ENCODE measurements at regions of chr20 and their contacts with region 1.

Region 1: GRCh38 chr20:37527638-37528441 is at the start of gene BLCAP:
- DNase-seq: peak; percentile 92 to 97 (median 95)
- ATAC-seq: peak; percentile 93
- H3K4me3 ChIP-seq: peak within 1 kb of the TSS; percentile 84
- H3K27ac ChIP-seq: peak within 1 kb of the TSS; percentile 97
- H3K4me1 ChIP-seq: peaks cover 28 to 32% of the 10 kb centered on the region in 2 experiments
- H3K27me3 ChIP-seq: no peaks in the 10 kb centered on the region
- CTCF ChIP-seq: no peak
- EP300 ChIP-seq: 0 out of 2 replicates have a peak, but pooled peaks have one; percentile 16
- POLR2A ChIP-seq: peak; percentile 84
- RAD21 ChIP-seq: no peak
- polyA plus RNA-seq, gene BLCAP: 16.9 to 17.3 TPM

Region 2: DNA sequence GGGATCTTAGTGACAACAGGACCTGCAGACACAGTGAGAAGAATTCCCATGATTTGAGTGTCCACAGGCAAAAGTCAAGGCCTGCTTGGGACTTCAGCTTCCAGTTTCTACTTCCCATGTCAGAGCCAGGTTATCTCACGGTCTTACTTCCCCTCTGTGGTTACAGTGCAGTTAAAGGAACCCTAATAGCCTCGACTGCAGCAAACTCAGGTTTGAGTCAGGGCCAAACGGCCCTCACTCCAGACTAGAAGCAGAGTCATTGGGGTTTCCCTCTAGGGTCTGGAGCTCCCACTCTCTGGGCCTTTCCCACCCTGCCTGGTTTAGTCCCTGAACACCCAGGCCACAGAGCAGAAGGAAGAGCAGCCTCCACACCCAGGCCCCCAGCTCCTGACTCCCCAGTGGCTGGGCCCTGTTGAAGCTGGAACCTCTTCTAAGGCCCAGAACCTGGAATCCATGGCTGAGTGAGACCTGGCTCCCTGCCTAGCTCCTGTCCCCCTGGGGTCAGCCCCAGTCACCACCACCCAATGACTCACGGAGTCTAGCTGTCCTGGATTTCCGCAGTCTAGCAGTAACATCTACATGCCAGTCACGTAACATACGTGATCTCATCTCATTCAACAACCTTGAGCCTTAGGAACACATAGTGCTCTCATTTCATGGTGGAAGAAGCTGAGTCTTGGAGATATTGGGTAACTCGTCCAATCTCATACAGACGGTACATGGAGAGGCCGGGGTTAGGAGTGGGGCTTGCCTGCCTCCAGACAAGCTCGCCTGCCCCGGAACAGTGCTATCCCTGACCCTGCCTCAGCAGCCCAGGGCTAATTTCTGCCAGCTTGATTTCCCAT is 257.0 kb before region 1 on chr20:
- CTCF ChIA-PET with region 1: interaction called, 19 read pairs
- POLR2A ChIA-PET with region 1: no interaction called
- in situ Hi-C with region 1: loop called (anchors 5 kb)
- intact Hi-C with region 1: loop called (anchors 5 kb)
- DNase-seq: peak in 1 of 4 experiments; percentile 55
- ATAC-seq: peak; percentile 75
- H3K4me3 ChIP-seq: no peak overlapping the region
- H3K27ac ChIP-seq: peak overlapping the region; percentile 63
- H3K4me1 ChIP-seq: peaks cover 19 to 23% of the 10 kb centered on the region in 2 experiments
- H3K27me3 ChIP-seq: no peaks in the 10 kb centered on the region; a peak in 2 of 5 replicates
- CTCF ChIP-seq: no peak
- EP300 ChIP-seq: no peak
- POLR2A ChIP-seq: no peak
- RAD21 ChIP-seq: no peak

Region 3: DNA sequence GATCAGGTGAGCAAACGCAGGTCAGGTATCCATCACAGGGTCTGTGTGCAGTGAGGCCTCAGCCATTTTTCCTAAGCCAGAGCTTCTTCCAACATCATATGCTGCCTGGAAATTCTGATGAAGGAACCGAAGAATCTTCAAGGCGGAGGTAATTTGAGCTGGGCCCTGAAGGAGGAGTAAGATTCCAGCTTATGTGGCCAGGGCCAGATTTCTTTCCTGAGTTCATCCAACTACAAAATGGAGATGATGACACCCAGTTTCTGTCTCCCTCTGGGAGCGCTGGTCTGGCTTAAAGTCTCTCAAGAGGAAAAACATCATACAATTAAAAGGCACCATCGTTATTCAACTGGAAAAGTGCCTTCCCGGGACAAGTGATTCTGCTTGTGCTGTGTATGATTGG is 245.3 kb before region 1 on chr20:
- CTCF ChIA-PET with region 1: no interaction called
- POLR2A ChIA-PET with region 1: no interaction called
- in situ Hi-C with region 1: no loop called
- intact Hi-C with region 1: loop called (anchors 2 kb)
- DNase-seq: peak in 1 of 4 experiments; percentile 36
- ATAC-seq: peak; percentile 64
- H3K4me3 ChIP-seq: no peak overlapping the region
- H3K27ac ChIP-seq: no peak overlapping the region
- H3K4me1 ChIP-seq: no peaks in the 10 kb centered on the region; a peak in 2 of 5 replicates
- H3K27me3 ChIP-seq: no peaks in the 10 kb centered on the region; a peak in 1 of 5 replicates
- CTCF ChIP-seq: peak; percentile 56 to 76 (median 59)
- EP300 ChIP-seq: no peak
- POLR2A ChIP-seq: no peak
- RAD21 ChIP-seq: peak; percentile 54 to 78

Region 4: GRCh38 chr20:37392421-37393178 is 135.2 kb before region 1 on chr20:
- CTCF ChIA-PET with region 1: no interaction called
- POLR2A ChIA-PET with region 1: no interaction called
- in situ Hi-C with region 1: no loop called
- intact Hi-C with region 1: loop called (anchors 5 kb)
- DNase-seq: peak; percentile 52 to 64 (median 59)
- ATAC-seq: peak; percentile 53
- H3K4me3 ChIP-seq: no peak overlapping the region
- H3K27ac ChIP-seq: no peak overlapping the region
- H3K4me1 ChIP-seq: peaks cover 13 to 57% of the 10 kb centered on the region in 2 experiments; a peak in 3 of 5 replicates
- H3K27me3 ChIP-seq: no peaks in the 10 kb centered on the region
- CTCF ChIP-seq: peak; percentile 60 to 68 (median 66)
- EP300 ChIP-seq: no peak
- POLR2A ChIP-seq: no peak
- RAD21 ChIP-seq: peak in 1 of 2 experiments; percentile 49; a peak in 2 of 4 replicates